Activated CD4-positive, alpha-beta T cell treated with anti-CD3 and anti-CD28 coated beads for 36 hours (primary cell): ENCODE measurements at regions of chr2 and their contacts with region 1.

Region 1: GRCh38 chr2:70142590-70143313 is 48.1 kb downstream of the C2orf42 start:
- DNase-seq: peak; percentile 100
- ATAC-seq: peak; percentile 57
- H3K4me3 Mint-ChIP-seq: peak overlapping the region; percentile 78
- H3K27ac Mint-ChIP-seq: peak overlapping the region; percentile 100
- H3K4me1 Mint-ChIP-seq: peaks cover 66% of the 10 kb centered on the region
- H3K27me3 Mint-ChIP-seq: no peaks in the 10 kb centered on the region

Region 2: GRCh38 chr2:69985688-69986087 is 157.1 kb before region 1 on chr2:
- CTCF ChIA-PET with region 1: no interaction called
- POLR2A ChIA-PET with region 1: no interaction called
- intact Hi-C with region 1: no loop called
- DNase-seq: no peak
- ATAC-seq: no peak
- H3K4me3 Mint-ChIP-seq: no peak overlapping the region
- H3K27ac Mint-ChIP-seq: no peak overlapping the region
- H3K4me1 Mint-ChIP-seq: peaks cover 3% of the 10 kb centered on the region
- H3K27me3 Mint-ChIP-seq: no peaks in the 10 kb centered on the region

Region 3: DNA sequence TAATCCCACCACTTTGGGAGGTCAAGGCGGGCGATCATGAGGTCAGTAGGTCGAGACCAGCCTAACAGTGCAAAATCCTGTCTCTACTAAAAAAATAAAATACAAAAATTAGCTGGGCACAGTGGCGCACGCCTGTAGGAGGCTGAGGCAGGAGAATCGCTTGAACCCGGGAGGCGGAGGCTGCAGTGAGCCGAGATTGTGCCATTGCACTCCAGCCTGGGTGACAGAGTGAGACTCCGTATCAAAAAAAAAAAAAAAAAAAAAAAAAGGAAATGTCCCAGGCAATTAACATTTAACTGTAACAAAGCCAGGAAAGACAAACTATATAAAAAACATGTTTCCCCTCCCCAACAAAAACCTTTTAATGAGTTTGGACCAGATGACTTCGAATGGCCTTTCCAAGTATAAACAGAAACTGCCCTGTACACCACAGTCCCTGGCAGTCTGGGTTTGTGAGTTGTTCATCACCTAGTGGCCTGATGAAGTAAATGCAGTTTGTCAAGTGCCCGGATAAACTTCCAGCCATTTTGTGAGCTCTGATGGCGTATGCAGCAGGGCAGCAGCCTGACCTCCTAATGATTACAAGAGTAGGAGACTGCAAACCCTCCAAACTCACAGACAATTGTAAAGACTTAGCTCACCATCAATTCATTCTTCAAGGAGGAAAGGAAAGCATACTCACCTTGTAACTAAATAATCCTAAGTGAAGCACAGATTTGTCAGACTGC is 72.0 kb before region 1 on chr2:
- CTCF ChIA-PET with region 1: interaction called, 10 read pairs
- POLR2A ChIA-PET with region 1: interaction called, 8 read pairs
- intact Hi-C with region 1: loop called (anchors 1 kb)
- DNase-seq: peak; percentile 73
- ATAC-seq: peak; percentile 60
- H3K4me3 Mint-ChIP-seq: peak overlapping the region; percentile 48
- H3K27ac Mint-ChIP-seq: peak overlapping the region; percentile 94
- H3K4me1 Mint-ChIP-seq: peaks cover 51% of the 10 kb centered on the region
- H3K27me3 Mint-ChIP-seq: no peaks in the 10 kb centered on the region

Region 4: GRCh38 chr2:70104231-70105111 is 38.3 kb before region 1 on chr2:
- CTCF ChIA-PET with region 1: interaction called, 8 read pairs
- POLR2A ChIA-PET with region 1: interaction called, 4 read pairs
- intact Hi-C with region 1: loop called in 1 of 2 experiments (anchors 1 kb)
- DNase-seq: peak; percentile 76
- ATAC-seq: no peak
- H3K4me3 Mint-ChIP-seq: peak overlapping the region; percentile 73
- H3K27ac Mint-ChIP-seq: peak overlapping the region; percentile 96
- H3K4me1 Mint-ChIP-seq: peaks cover 56% of the 10 kb centered on the region
- H3K27me3 Mint-ChIP-seq: no peaks in the 10 kb centered on the region

Region 5: DNA sequence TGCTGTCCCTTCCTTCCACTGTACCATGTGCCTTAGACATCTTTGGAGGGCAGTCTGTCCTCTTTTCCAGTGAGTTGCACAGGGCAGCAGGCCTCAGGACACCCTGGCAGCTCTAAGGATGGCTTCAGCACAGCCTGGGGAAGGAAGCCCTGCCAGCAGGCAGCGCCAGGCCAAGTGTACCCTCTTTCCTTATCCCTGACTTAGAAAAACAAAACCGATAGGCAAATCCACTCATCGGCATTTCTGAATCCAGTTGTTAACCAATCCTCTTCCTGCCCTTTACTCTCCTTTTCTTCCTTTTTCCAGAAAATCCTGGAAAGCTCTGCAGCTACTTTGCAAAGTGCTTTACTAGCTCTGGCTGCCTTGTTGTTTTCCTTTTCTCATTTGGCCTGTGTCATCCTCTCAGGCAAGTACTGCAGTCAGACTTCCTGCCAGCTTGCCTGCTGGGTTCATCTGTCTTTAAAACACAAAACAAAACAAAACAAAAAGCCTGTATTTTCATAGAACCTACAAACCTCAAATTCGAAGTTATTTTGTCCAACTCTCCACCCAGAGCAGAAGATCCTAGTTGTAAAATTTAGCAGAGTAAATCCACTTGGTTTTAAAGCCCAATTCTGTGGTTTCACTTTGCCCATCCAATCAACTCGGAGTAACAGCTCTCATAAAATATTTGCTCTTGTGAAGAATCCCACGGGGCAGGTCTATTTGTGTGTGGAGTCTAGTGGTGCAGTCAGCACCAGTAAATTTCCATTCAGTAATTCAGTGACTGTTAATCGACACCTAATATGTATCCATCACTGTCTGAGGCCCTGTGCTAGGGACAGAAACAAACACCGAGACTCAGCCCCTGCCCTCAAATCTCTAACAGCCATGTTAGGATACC is 10.3 kb before region 1 on chr2:
- CTCF ChIA-PET with region 1: interaction called, 13 read pairs
- POLR2A ChIA-PET with region 1: interaction called, 10 read pairs
- intact Hi-C with region 1: loop called in 1 of 2 experiments (anchors 1 kb)
- DNase-seq: peak; percentile 59
- ATAC-seq: peak; percentile 34
- H3K4me3 Mint-ChIP-seq: peak overlapping the region; percentile 86
- H3K27ac Mint-ChIP-seq: peak overlapping the region; percentile 100
- H3K4me1 Mint-ChIP-seq: peaks cover 74% of the 10 kb centered on the region
- H3K27me3 Mint-ChIP-seq: no peaks in the 10 kb centered on the region

Region 6: DNA sequence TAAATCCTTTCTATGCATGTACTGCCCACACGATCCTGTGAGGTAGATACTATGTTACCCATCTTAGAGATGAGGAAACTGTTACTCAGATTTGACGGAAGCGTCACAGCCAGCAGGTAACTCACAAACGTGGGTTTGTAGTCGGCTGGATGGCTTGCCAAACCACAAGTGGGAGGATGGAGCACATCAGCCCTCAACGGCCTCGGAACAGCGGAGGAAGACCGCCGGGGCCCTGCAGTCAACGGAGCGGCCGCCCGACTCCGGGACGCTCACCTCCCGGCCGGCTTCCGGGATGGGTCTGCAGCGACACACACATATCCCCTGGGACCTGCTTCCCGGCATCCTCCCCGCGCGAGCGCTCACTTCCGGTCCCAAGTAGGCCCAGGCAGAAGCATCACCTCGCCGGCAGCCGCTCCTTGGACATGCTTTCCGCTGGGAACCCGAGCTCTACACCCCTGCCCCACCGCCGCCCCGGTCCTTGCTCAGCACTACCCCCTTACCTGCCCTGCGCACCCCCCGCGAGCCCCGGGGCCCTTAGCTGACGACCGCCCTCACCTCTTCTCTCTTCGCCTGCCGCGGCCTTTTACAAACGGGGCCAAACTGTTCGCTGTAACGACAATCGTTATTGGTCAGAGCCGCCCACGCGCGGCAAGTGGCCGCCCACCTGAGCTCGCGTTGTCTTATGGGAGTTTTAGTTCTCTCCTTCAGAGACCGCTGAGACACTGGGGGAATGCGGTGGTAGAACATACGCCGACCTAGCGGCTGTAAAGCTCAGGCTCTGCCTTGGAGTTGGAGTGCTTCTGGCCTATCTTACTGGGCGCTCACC is 47.9 kb after region 1 on chr2 and contains the start of gene C2orf42:
- CTCF ChIA-PET with region 1: interaction called, 3 read pairs
- POLR2A ChIA-PET with region 1: interaction called, 7 read pairs
- intact Hi-C with region 1: loop called (anchors 1 kb)
- DNase-seq: peak; percentile 98
- ATAC-seq: peak; percentile 91
- H3K4me3 Mint-ChIP-seq: peak within 1 kb of the TSS; percentile 84
- H3K27ac Mint-ChIP-seq: peak within 1 kb of the TSS; percentile 97
- H3K4me1 Mint-ChIP-seq: peaks cover 16% of the 10 kb centered on the region
- H3K27me3 Mint-ChIP-seq: no peaks in the 10 kb centered on the region
- total RNA-seq, gene C2orf42: 22.6 to 23.3 TPM